ENCODE measurements at regions of chr7 and their contacts with region 1.

Region 1: GRCh38 chr7:6323967-6324701 is 51.7 kb upstream of the CYTH3 start:
- DNase-seq: no peak
- H3K4me3 ChIP-seq: no peak overlapping the region
- H3K27ac ChIP-seq: no peak overlapping the region
- H3K4me1 ChIP-seq: peaks cover 2% of the 10 kb centered on the region
- H3K27me3 ChIP-seq: no peaks in the 10 kb centered on the region
- CTCF ChIP-seq: no peak

Region 2: DNA sequence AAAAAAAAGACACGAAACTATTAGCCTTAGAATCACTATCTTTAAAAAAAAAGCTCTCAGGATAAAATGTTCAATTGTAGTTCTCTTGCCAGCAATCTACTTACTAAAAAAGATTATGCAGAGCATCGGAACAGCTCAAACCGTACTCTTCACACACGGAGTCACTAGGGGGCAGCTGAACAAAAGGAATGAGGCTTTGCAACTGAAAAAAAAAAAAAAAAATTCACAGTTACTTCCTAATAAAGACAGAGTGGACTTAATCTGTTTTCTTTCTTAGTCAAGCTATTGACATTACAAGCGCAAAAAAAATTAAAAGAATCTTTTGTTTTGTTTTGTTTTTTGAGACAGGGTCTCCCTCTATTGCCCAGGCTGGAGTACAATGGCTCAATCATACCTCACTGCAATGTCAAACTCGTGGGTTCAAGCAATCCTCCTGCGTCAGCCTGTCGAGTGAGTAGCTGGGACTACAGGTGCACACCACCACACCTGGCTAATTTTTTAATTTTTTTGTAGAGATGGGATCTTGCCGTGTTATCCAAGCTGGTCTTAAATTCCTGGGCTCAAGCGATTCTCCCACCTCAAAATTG is 326.8 kb before region 1 on chr7:
- CTCF ChIA-PET with region 1: no interaction called
- dilution Hi-C with region 1: no loop called
- in situ Hi-C with region 1: no loop called
- intact Hi-C with region 1: loop called (anchors 1 kb)
- DNase-seq: peak; percentile 36
- H3K4me3 ChIP-seq: no peak overlapping the region
- H3K27ac ChIP-seq: no peak overlapping the region
- H3K4me1 ChIP-seq: peaks cover 5% of the 10 kb centered on the region
- H3K27me3 ChIP-seq: no peaks in the 10 kb centered on the region
- CTCF ChIP-seq: peak; percentile 36 to 52

Region 3: DNA sequence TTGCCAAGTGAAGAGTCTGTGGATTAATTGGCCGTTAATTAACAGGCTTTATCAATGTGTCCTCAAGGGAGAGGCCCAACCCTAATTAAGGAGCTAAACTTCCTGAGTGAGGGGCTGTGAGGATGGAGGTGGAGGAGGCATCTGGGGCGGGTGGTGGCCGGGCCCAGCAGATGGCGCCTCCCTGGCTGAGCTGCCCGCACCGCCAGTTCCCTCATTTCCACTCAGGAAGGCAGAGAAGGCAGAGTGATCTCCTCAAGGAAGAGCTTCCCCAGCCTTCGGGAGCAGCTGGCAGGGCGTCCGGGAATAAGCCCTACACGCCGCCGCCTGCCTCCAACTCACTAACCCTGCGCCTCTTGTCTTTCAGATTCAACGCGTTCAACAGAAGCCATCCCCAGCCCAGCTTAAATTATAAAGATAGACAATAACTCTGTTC is 163.9 kb before region 1 on chr7:
- CTCF ChIA-PET with region 1: no interaction called
- dilution Hi-C with region 1: no loop called
- in situ Hi-C with region 1: loop called (anchors 5 kb)
- intact Hi-C with region 1: loop called (anchors 1 kb)
- DNase-seq: peak; percentile 6
- H3K4me3 ChIP-seq: no peak overlapping the region
- H3K27ac ChIP-seq: no peak overlapping the region
- H3K4me1 ChIP-seq: no peaks in the 10 kb centered on the region
- H3K27me3 ChIP-seq: no peaks in the 10 kb centered on the region
- CTCF ChIP-seq: peak; percentile 8 to 63

Region 4: GRCh38 chr7:6272481-6273323 is 51.4 kb before region 1 on chr7 and contains the start of gene CYTH3:
- CTCF ChIA-PET with region 1: no interaction called
- dilution Hi-C with region 1: no loop called
- in situ Hi-C with region 1: no loop called
- intact Hi-C with region 1: loop called (anchors 2 kb)
- DNase-seq: peak; percentile 75
- H3K4me3 ChIP-seq: peak within 1 kb of the TSS; percentile 82 to 90 (median 86)
- H3K27ac ChIP-seq: peak within 1 kb of the TSS; percentile 75
- H3K4me1 ChIP-seq: peaks cover 19% of the 10 kb centered on the region
- H3K27me3 ChIP-seq: no peaks in the 10 kb centered on the region
- CTCF ChIP-seq: no peak
- total RNA-seq, gene CYTH3: 33.3 to 33.7 TPM

Region 5: GRCh38 chr7:6350433-6351058 is 26.4 kb after region 1 on chr7:
- CTCF ChIA-PET with region 1: no interaction called
- dilution Hi-C with region 1: no loop called
- in situ Hi-C with region 1: no loop called
- intact Hi-C with region 1: no loop called
- DNase-seq: peak; percentile 61
- H3K4me3 ChIP-seq: no peak overlapping the region
- H3K27ac ChIP-seq: no peak overlapping the region
- H3K4me1 ChIP-seq: peaks cover 2% of the 10 kb centered on the region
- H3K27me3 ChIP-seq: no peaks in the 10 kb centered on the region
- CTCF ChIP-seq: no peak

Measured in mammary epithelial cell (primary cell).